IMR-90 (cell line): ENCODE measurements at regions of chr7 and their contacts with region 1.

Region 1: GRCh38 chr7:140867467-140868462 is 57.0 kb downstream of the BRAF start:
- DNase-seq: no peak
- ATAC-seq: no peak
- H3K4me3 ChIP-seq: no peak overlapping the region
- H3K27ac ChIP-seq: no peak overlapping the region
- H3K4me1 ChIP-seq: no peaks in the 10 kb centered on the region
- H3K27me3 ChIP-seq: no peaks in the 10 kb centered on the region
- CTCF ChIP-seq: no peak
- POLR2A ChIP-seq: no peak
- RAD21 ChIP-seq: no peak

Region 2: GRCh38 chr7:140745266-140746058 is 122.3 kb before region 1 on chr7:
- CTCF ChIA-PET with region 1: no interaction called
- POLR2A ChIA-PET with region 1: no interaction called
- dilution Hi-C with region 1: no loop called
- in situ Hi-C with region 1: no loop called
- intact Hi-C with region 1: no loop called
- DNase-seq: no peak
- ATAC-seq: no peak
- H3K4me3 ChIP-seq: no peak overlapping the region
- H3K27ac ChIP-seq: no peak overlapping the region
- H3K4me1 ChIP-seq: no peaks in the 10 kb centered on the region
- H3K27me3 ChIP-seq: no peaks in the 10 kb centered on the region
- CTCF ChIP-seq: no peak
- POLR2A ChIP-seq: no peak
- RAD21 ChIP-seq: no peak

Region 3: DNA sequence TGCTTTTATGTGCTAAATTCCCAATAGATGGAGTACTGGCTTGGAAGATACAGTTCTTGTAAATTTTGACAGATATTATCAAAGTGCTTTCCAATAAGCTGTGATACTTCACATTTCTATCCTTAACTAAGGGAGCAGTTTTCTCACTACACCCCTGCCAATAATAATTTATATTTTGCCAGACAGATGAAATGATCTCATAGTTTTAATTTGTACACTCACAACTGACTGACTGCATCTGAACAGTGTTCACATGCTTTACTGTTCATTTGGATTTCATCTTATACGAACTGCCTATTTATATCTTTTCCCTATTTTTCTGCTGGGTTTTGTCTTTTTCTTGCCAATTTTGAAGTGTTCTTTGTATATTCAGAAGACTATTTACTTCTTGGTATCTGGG is 39.0 kb before region 1 on chr7:
- CTCF ChIA-PET with region 1: no interaction called
- POLR2A ChIA-PET with region 1: no interaction called
- dilution Hi-C with region 1: no loop called
- in situ Hi-C with region 1: no loop called
- intact Hi-C with region 1: loop called (anchors 5 kb)
- DNase-seq: no peak
- ATAC-seq: no peak
- H3K4me3 ChIP-seq: no peak overlapping the region
- H3K27ac ChIP-seq: no peak overlapping the region
- H3K4me1 ChIP-seq: no peaks in the 10 kb centered on the region
- H3K27me3 ChIP-seq: no peaks in the 10 kb centered on the region
- CTCF ChIP-seq: no peak
- POLR2A ChIP-seq: no peak
- RAD21 ChIP-seq: no peak

Region 4: DNA sequence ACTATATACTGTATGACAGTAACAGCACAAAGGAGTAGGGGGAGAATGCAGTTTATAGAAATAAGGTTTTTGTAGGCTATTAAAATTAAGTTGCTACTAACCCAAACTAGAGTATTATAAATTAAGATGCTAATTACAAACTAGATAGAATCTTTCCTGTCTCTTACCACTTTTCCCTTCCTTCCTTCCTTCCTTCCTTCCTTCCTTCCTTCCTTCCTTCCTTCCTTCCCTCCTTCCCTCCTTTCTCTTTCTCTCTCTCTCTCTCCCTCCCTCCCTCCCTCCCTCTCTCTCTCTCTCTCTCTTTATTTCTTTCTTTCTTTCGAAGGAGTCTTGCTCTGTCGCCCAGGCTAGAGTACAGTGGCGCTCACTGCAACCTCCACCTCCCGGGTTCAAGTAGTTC is 93.4 kb after region 1 on chr7:
- CTCF ChIA-PET with region 1: no interaction called
- POLR2A ChIA-PET with region 1: no interaction called
- dilution Hi-C with region 1: no loop called
- in situ Hi-C with region 1: no loop called
- intact Hi-C with region 1: no loop called
- DNase-seq: no peak
- ATAC-seq: no peak
- H3K4me3 ChIP-seq: no peak overlapping the region
- H3K27ac ChIP-seq: no peak overlapping the region
- H3K4me1 ChIP-seq: no peaks in the 10 kb centered on the region
- H3K27me3 ChIP-seq: no peaks in the 10 kb centered on the region
- CTCF ChIP-seq: no peak
- POLR2A ChIP-seq: no peak
- RAD21 ChIP-seq: no peak